GM10248 (cell line): ENCODE measurements at regions of chr18 and their contacts with region 1.

Region 1: DNA sequence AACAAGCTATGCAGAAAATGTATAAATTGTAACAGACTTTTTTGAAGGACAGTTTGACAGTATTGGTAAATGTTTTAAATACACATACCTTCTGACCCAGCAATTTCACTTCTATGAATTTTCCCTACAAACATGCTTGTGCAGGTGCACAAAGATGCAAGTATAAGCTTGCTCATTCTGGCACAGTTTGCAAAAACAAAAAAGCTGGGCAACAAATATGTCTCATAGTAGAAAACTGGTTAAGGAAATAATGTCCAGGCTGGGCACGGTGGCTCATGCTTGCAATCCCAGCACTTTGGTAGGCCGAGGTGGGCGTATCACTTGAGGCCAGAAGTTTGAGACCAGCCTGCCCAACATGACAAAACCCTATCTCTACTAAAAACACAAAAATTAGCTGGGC is 96.9 kb upstream of the NEDD4L start:
- DNase-seq: no peak
- CTCF ChIP-seq: no peak

Region 2: DNA sequence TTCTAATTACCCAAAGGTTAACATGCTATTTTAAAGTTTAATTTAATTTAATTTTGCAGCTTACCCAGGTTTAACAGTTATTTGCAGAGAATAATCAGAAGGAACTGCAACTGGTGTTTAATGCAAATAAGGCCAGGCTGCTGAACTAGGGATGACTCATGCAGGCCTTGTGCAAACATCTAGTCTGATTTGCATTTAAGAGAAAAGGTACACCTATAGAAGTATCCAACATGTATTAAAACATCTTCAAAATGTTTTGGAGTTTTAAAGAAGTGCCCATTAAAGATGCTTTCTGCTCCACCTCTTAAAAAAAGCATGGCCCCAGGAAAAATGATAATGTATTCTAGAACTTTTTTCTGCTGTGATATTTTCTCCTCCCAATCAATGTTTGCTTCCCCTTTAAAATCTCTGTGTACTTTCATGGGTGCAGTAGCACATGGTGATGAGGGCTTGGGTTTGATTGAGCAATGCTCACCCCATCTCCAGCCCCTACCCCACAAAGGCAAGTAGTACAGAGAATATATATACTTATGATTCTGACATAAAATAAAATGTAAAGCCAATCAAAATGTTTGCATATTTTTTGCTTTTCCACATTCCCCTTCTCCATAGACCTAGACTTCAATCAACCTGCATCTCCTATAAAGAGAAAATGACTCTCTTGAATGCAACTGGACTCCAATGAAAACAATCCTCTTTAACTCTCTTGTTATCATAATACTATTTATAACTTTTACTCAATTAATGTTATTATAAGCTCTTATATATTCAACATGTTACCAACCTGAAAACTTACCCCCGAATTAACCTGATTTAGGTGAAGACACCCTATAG is 198.1 kb before region 1 on chr18:
- CTCF ChIA-PET with region 1: no interaction called
- POLR2A ChIA-PET with region 1: no interaction called
- DNase-seq: peak; percentile 44
- CTCF ChIP-seq: no peak

Region 3: GRCh38 chr18:57959278-57959677 is 12.2 kb after region 1 on chr18:
- CTCF ChIA-PET with region 1: interaction called, 17 read pairs
- POLR2A ChIA-PET with region 1: no interaction called
- DNase-seq: peak; percentile 48
- CTCF ChIP-seq: peak; percentile 34

Region 4: GRCh38 chr18:58004317-58004716 is 57.2 kb after region 1 on chr18:
- CTCF ChIA-PET with region 1: no interaction called
- POLR2A ChIA-PET with region 1: no interaction called
- DNase-seq: no peak
- CTCF ChIP-seq: no peak